ENCODE measurements at regions of chr5 and their contacts with region 1.

Region 1: GRCh38 chr5:141040771-141041426 is 10.3 kb upstream of the PCDHB1 start:
- DNase-seq: peak; percentile 87
- H3K4me3 ChIP-seq: peak overlapping the region; percentile 60 to 66
- H3K27ac ChIP-seq: peak overlapping the region; percentile 25 to 90; a peak in 3 of 4 replicates
- H3K4me1 ChIP-seq: peaks cover 0 to 7% of the 10 kb centered on the region in 2 experiments; a peak in 2 of 4 replicates
- H3K27me3 ChIP-seq: no peaks in the 10 kb centered on the region
- CTCF ChIP-seq: peak; percentile 84
- EP300 ChIP-seq: no peak
- RAD21 ChIP-seq: peak; percentile 95

Region 2: DNA sequence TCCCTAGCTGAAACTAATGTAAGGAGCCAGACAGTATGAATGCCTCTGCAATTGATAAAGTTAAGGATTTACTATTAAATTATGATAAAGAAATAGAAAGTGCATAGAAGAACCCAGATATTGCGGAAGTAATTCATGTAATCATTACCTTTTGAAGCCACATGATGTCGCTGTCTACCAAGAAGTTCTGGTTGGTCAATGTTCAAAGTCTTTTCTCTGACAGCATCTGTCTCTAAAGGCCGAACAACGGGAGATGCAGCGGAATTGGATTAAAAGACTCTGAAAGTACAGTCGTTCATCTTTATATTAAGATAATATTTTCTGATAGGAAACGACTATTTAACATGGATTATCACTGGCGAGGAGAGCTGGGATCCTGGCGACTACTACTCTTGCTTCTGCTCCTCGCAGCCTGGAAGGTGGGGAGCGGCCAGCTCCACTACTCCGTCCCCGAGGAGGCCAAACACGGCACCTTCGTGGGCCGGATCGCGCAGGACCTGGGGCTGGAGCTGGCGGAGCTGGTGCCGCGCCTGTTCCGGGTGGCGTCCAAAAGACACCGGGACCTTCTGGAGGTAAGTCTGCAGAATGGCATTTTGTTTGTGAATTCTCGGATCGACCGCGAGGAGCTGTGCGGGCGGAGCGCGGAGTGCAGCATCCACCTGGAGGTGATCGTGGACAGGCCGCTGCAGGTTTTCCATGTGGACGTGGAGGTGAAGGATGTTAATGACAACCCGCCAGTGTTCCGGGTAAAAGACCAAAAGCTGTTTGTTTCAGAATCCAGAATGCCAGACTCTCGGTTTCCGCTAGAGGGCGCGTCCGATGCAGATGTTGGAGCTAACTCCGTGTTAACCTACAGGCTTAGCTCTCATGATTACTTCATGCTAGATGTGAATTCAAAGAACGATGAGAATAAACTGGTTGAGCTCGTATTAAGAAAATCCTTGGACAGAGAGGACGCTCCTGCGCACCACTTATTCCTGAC is 199.6 kb before region 1 on chr5 and contains the start of gene PCDHA8:
- CTCF ChIA-PET with region 1: interaction called, 189 read pairs
- POLR2A ChIA-PET with region 1: interaction called, 26 read pairs
- DNase-seq: peak; percentile 83
- H3K4me3 ChIP-seq: peak within 1 kb of the TSS; percentile 66 to 96
- H3K27ac ChIP-seq: peak within 1 kb of the TSS in 1 of 2 experiments; percentile 50; a peak in 1 of 4 replicates
- H3K4me1 ChIP-seq: no peaks in the 10 kb centered on the region
- H3K27me3 ChIP-seq: no peaks in the 10 kb centered on the region
- CTCF ChIP-seq: peak; percentile 87
- EP300 ChIP-seq: no peak
- RAD21 ChIP-seq: peak; percentile 92
- polyA plus RNA-seq, gene PCDHA8: 0.54 and 0.63 TPM in 2 replicates

Region 3: GRCh38 chr5:140868721-140869554 is 172.0 kb before region 1 on chr5 and contains the start of gene PCDHA11:
- CTCF ChIA-PET with region 1: interaction called, 63 read pairs
- POLR2A ChIA-PET with region 1: no interaction called
- DNase-seq: no peak
- H3K4me3 ChIP-seq: no peak within 1 kb of the TSS
- H3K27ac ChIP-seq: no peak within 1 kb of the TSS
- H3K4me1 ChIP-seq: no peaks in the 10 kb centered on the region
- H3K27me3 ChIP-seq: no peaks in the 10 kb centered on the region
- CTCF ChIP-seq: no peak
- EP300 ChIP-seq: no peak
- RAD21 ChIP-seq: no peak
- polyA plus RNA-seq, gene PCDHA11: not detected in 2 replicates

Region 4: DNA sequence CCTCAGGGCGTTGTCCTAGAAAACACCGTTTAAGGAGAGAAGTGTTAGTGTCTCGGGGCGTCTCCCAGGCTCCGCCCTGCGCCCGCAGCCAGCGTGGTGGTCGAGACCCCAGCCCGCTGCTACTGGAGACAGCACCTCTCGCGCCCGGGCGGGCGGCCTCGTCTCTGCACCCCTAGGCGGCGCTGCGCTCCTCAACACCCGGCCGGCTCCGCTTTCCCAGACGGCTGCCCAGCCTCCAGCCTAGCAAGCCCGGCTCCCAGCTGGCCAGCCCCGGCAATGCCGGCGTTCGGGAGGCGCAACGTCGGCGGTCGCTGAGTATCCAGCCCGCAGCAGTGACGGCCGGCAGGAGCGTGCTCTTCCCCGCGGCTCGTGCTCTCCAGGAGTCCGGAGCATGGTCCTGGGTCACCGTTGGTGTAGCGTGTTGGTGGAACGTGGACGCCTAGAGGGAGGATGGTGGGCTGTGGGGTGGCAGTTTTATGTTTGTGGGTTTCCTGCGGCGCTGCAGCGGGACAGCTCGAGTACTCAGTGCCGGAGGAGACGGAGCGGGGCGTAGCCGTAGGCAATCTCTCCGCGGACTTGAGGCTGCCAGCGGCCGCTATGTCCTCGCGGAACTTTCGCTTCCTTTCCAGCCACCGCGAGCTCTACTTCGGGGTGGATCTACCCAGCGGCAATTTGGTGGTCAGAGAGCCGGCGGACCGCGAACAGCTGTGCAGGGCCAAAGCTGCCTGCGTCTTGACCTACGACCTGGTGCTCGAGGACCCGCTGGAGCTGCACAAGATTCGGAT is 114.3 kb before region 1 on chr5:
- CTCF ChIA-PET with region 1: interaction called, 194 read pairs
- POLR2A ChIA-PET with region 1: interaction called, 54 read pairs
- DNase-seq: peak; percentile 95
- H3K4me3 ChIP-seq: peak overlapping the region; percentile 54 to 62
- H3K27ac ChIP-seq: peak overlapping the region in 1 of 2 experiments; percentile 79; a peak in 2 of 4 replicates
- H3K4me1 ChIP-seq: peaks cover 0 to 7% of the 10 kb centered on the region in 2 experiments; a peak in 2 of 4 replicates
- H3K27me3 ChIP-seq: no peaks in the 10 kb centered on the region
- CTCF ChIP-seq: peak; percentile 70
- EP300 ChIP-seq: no peak
- RAD21 ChIP-seq: peak; percentile 79

Region 5: GRCh38 chr5:140977003-140977402 is 63.9 kb before region 1 on chr5:
- CTCF ChIA-PET with region 1: interaction called, 23 read pairs
- POLR2A ChIA-PET with region 1: no interaction called
- DNase-seq: no peak
- H3K4me3 ChIP-seq: no peak overlapping the region
- H3K27ac ChIP-seq: peak overlapping the region in 1 of 2 experiments; percentile 98; a peak in 2 of 4 replicates
- H3K4me1 ChIP-seq: peaks cover 9 to 33% of the 10 kb centered on the region in 2 experiments; a peak in 3 of 4 replicates
- H3K27me3 ChIP-seq: no peaks in the 10 kb centered on the region
- CTCF ChIP-seq: no peak
- EP300 ChIP-seq: peak in 1 of 2 experiments; percentile 28; a peak in 1 of 4 replicates
- RAD21 ChIP-seq: no peak

Region 6: GRCh38 chr5:141001854-141002604 is 38.9 kb before region 1 on chr5:
- CTCF ChIA-PET with region 1: interaction called, 27 read pairs
- POLR2A ChIA-PET with region 1: interaction called, 12 read pairs
- DNase-seq: peak; percentile 77
- H3K4me3 ChIP-seq: peak overlapping the region; percentile 47 to 59
- H3K27ac ChIP-seq: peak overlapping the region in 1 of 2 experiments; percentile 100; a peak in 3 of 4 replicates
- H3K4me1 ChIP-seq: peaks cover 25 to 28% of the 10 kb centered on the region in 2 experiments; a peak in 3 of 4 replicates
- H3K27me3 ChIP-seq: no peaks in the 10 kb centered on the region
- CTCF ChIP-seq: no peak
- EP300 ChIP-seq: peak in 1 of 2 experiments; percentile 78; a peak in 2 of 4 replicates
- RAD21 ChIP-seq: peak; percentile 29; the same call in 1 of the 2 replicates

Measured in SK-N-SH (cell line).